ENCODE measurements at regions of chr22 and their contacts with region 1.

Region 1: DNA sequence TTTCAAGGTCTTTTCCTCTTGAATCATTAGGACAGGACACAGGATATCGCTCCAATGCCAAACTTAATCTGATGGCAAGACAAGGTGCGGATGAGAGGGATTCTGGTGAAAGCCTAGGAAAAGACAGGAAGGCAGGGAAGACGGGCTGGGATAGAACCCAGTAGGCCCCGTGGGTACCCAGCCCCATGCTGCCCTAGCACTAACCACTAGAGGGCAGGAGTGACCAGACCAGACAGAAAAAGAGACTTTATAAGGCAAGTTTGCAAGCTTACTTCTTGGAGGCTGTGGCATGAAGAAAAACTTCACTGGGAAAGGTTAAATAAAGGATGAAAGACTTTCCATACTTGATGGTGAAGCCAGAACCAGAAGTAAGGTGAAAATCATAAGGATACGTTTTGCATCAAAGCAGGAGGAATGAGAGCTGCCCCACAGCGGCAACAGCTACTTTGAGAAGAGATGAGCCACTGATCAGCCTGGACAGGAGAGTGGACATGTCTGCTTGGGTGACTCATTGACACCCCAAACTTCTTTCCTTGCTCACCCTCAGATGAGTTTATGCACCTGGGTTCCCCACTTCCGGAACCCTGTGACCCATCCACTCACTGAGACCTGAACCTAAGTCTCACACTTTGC is 39.8 kb downstream of the SYN3 start:
- DNase-seq: peak; percentile 80
- H3K4me3 ChIP-seq: no peak overlapping the region; a peak in 1 of 4 replicates
- H3K27ac ChIP-seq: no peak overlapping the region
- H3K4me1 ChIP-seq: no peaks in the 10 kb centered on the region
- H3K27me3 ChIP-seq: no peaks in the 10 kb centered on the region
- CTCF ChIP-seq: peak; percentile 83
- EP300 ChIP-seq: no peak
- RAD21 ChIP-seq: peak; percentile 87

Region 2: GRCh38 chr22:33006220-33006954 is 12.0 kb before region 1 on chr22:
- CTCF ChIA-PET with region 1: interaction called, 27 read pairs
- POLR2A ChIA-PET with region 1: no interaction called
- DNase-seq: no peak
- H3K4me3 ChIP-seq: no peak overlapping the region
- H3K27ac ChIP-seq: no peak overlapping the region
- H3K4me1 ChIP-seq: no peaks in the 10 kb centered on the region
- H3K27me3 ChIP-seq: no peaks in the 10 kb centered on the region
- CTCF ChIP-seq: no peak
- EP300 ChIP-seq: no peak
- RAD21 ChIP-seq: no peak

Region 3: GRCh38 chr22:33063611-33064010 is 45.3 kb after region 1 on chr22:
- CTCF ChIA-PET with region 1: interaction called, 411 read pairs
- POLR2A ChIA-PET with region 1: no interaction called
- DNase-seq: no peak
- H3K4me3 ChIP-seq: no peak overlapping the region
- H3K27ac ChIP-seq: no peak overlapping the region
- H3K4me1 ChIP-seq: no peaks in the 10 kb centered on the region; a peak in 1 of 4 replicates
- H3K27me3 ChIP-seq: no peaks in the 10 kb centered on the region
- CTCF ChIP-seq: no peak
- EP300 ChIP-seq: no peak
- RAD21 ChIP-seq: no peak

Region 4: GRCh38 chr22:33116872-33117547 is 98.7 kb after region 1 on chr22:
- CTCF ChIA-PET with region 1: interaction called, 11 read pairs
- POLR2A ChIA-PET with region 1: no interaction called
- DNase-seq: no peak
- H3K4me3 ChIP-seq: no peak overlapping the region
- H3K27ac ChIP-seq: no peak overlapping the region
- H3K4me1 ChIP-seq: peaks cover 0 to 3% of the 10 kb centered on the region in 2 experiments; a peak in 2 of 4 replicates
- H3K27me3 ChIP-seq: no peaks in the 10 kb centered on the region
- CTCF ChIP-seq: no peak
- EP300 ChIP-seq: no peak
- RAD21 ChIP-seq: no peak

Region 5: DNA sequence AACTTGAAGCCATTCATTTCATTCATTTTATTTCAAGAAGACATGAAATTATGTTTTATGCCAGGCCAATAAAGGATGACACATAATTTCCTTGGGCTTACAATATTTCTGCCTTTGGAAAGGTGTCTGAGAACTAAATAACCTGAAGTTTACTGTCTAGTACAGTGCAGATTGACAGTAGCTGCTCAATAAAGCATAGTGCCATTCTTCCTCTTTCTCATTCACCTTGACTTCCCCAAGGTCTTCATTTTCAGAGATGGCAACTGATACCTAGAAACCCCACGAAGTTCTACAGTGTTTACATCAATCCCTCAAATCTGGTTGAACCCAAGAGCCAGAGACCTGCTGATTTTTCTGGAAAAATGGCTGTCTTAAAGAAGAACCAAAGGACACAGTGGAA is 184.1 kb after region 1 on chr22:
- CTCF ChIA-PET with region 1: interaction called, 69 read pairs
- POLR2A ChIA-PET with region 1: interaction called, 5 read pairs
- DNase-seq: no peak
- H3K4me3 ChIP-seq: no peak overlapping the region
- H3K27ac ChIP-seq: no peak overlapping the region
- H3K4me1 ChIP-seq: no peaks in the 10 kb centered on the region; a peak in 1 of 4 replicates
- H3K27me3 ChIP-seq: no peaks in the 10 kb centered on the region
- CTCF ChIP-seq: no peak
- EP300 ChIP-seq: no peak
- RAD21 ChIP-seq: no peak